Left lung (tissue), 14 donors: ENCODE measurements at regions of chrX and their contacts with region 1.

Region 1: DNA sequence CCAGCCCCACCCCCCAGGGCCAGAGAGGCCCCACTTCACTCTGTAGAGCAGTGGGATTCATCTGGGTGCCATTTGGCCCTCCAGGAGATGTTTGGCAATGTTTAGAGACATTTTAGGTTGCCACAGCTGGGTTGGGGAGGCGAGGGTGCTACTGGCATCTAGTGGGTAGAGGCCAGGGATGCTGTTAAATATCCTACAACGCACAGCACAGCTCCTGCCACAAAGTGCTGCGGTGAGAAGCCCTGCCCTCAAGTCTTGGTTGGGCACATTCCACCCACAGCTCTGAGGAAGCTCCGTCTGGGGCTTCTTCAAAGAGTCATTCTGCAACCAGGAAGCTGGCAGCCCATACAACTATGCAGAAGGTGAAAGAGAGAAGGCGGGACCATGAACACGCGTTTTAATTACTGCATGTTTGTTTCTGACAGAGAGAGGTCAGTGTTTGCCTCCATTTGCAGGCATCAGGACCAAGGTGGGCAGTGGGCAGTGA is 48.1 kb upstream of the FAM9C start:
- DNase-seq: peak in 2 of 4 donors; percentile 57 to 69
- ATAC-seq: peak; percentile 56
- H3K4me3 ChIP-seq: no peak overlapping the region
- H3K27ac ChIP-seq: peak overlapping the region; percentile 71 to 87
- H3K4me1 ChIP-seq: peaks cover 0 to 55% of the 10 kb centered on the region in 2 donors
- H3K27me3 ChIP-seq: no peaks in the 10 kb centered on the region
- CTCF ChIP-seq: no peak

Region 2: GRCh38 chrX:12974796-12975669 is 117.5 kb before region 1 on chrX and contains the start of gene TMSB4X:
- intact Hi-C with region 1: loop called in 1 of 2 experiments (anchors 10 kb)
- DNase-seq: peak; percentile 74 to 93 (median 89)
- ATAC-seq: peak; percentile 81
- H3K4me3 ChIP-seq: peak within 1 kb of the TSS; percentile 48 to 63
- H3K27ac ChIP-seq: peak within 1 kb of the TSS; percentile 97 to 98
- H3K4me1 ChIP-seq: peaks cover 0 to 32% of the 10 kb centered on the region in 2 donors
- H3K27me3 ChIP-seq: peaks cover 0 to 16% of the 10 kb centered on the region in 2 donors
- CTCF ChIP-seq: no peak
- polyA plus RNA-seq, gene TMSB4X: 3,301 to 3,721 (median 3,470) TPM

Region 3: GRCh38 chrX:12988797-12989196 is 103.7 kb before region 1 on chrX:
- intact Hi-C with region 1: no loop called
- DNase-seq: peak in 1 of 4 donors; percentile 62
- ATAC-seq: peak; percentile 90
- H3K4me3 ChIP-seq: no peak overlapping the region
- H3K27ac ChIP-seq: peak overlapping the region in 1 of 2 donors; percentile 33
- H3K4me1 ChIP-seq: peaks cover 3 to 13% of the 10 kb centered on the region in 2 donors
- H3K27me3 ChIP-seq: no peaks in the 10 kb centered on the region
- CTCF ChIP-seq: no peak

Region 4: DNA sequence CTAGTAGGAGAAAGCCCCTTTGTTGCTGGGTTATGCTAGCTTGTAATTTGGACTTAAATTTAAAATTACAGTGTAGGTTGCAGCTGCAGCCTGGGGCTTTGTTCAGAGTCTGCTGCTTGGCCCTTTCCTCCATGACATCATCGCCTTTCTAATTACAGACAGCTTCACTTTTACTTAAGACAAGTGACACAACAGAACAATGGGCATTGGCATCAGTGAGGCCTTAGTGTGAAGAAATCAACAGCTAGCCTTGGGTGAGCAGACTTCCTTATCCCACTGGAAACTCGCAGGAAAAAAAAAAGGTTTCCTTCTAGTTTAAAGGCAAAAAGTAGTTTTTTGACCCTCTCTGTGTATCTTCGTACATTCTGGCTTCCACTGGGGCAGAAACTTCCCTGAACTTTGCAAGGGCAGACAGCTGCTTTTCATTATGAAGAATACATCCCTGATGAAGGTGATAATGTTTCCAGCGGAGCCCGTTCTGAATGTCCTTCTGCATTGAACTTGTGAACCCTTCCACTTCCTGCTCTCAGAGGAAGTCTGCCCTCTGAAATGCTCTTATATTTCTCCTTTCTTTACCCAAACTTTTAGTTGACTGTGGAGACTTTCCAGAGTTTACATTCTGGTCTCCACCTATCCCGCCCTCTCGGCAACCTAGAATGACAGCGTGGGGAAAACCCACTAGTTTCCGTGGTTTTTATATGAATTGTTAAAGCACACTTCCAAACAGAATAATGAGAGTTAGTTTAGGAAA is 75.2 kb after region 1 on chrX:
- intact Hi-C with region 1: no loop called
- DNase-seq: no peak
- ATAC-seq: peak; percentile 35
- H3K4me3 ChIP-seq: no peak overlapping the region
- H3K27ac ChIP-seq: peak overlapping the region; percentile 14 to 77
- H3K4me1 ChIP-seq: peaks cover 0 to 17% of the 10 kb centered on the region in 2 donors
- H3K27me3 ChIP-seq: no peaks in the 10 kb centered on the region
- CTCF ChIP-seq: no peak